ENCODE measurements at regions of chr15 and their contacts with region 1.

Region 1: GRCh38 chr15:92797168-92797951 is 102.8 kb upstream of the CHD2 start:
- DNase-seq: peak; percentile 89
- H3K4me3 ChIP-seq: no peak overlapping the region
- H3K27ac ChIP-seq: no peak overlapping the region
- H3K4me1 ChIP-seq: peaks cover 9% of the 10 kb centered on the region
- CTCF ChIP-seq: peak; percentile 96

Region 2: GRCh38 chr15:92917606-92918407 is 120.4 kb after region 1 on chr15:
- CTCF ChIA-PET with region 1: interaction called, 5 read pairs
- POLR2A ChIA-PET with region 1: interaction called, 5 read pairs
- intact Hi-C with region 1: loop called (anchors 1 kb)
- DNase-seq: peak; percentile 95
- H3K4me3 ChIP-seq: peak overlapping the region; percentile 2
- H3K27ac ChIP-seq: peak overlapping the region; percentile 74
- H3K4me1 ChIP-seq: peaks cover 73% of the 10 kb centered on the region
- CTCF ChIP-seq: peak; percentile 99

Region 3: GRCh38 chr15:93020976-93021772 is 223.8 kb after region 1 on chr15:
- CTCF ChIA-PET with region 1: no interaction called
- POLR2A ChIA-PET with region 1: no interaction called
- intact Hi-C with region 1: loop called (anchors 5 kb)
- DNase-seq: no peak
- H3K4me3 ChIP-seq: no peak overlapping the region
- H3K27ac ChIP-seq: no peak overlapping the region
- H3K4me1 ChIP-seq: no peaks in the 10 kb centered on the region
- CTCF ChIP-seq: no peak

Region 4: DNA sequence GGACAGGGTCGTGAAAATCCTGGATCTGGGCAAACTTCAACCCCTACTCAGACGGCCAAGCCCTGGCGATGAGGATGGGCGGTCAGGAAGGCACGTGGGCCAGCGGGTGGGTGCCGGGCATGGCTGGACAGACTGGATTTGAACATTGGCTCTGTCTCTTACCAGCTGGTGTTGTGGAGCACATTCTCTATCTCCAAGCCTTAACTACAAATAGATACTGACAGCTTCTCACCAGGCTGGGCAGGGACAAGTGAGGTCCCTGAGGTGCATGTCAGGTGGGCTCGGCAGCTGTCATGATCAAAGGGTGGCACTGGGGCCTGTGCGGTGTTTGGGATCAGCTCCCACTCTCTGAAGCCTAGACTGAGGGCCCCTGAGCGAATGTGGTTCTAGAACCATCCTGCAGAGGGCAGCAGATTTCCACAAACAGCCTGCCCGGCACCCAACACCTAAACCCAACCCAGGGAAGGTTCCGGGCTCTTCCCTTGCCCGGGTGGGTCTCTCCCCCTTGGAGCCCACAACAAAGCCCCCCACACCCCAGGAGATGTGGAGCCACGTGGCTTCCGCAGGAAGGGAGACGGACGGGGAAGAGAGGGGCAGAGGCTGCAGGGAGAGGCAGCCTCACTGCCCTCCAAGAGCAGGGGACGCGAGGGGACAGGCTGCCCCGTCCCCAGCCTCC is 233.2 kb after region 1 on chr15:
- CTCF ChIA-PET with region 1: interaction called, 10 read pairs
- POLR2A ChIA-PET with region 1: no interaction called
- intact Hi-C with region 1: no loop called
- DNase-seq: peak; percentile 69
- H3K4me3 ChIP-seq: no peak overlapping the region
- H3K27ac ChIP-seq: no peak overlapping the region
- H3K4me1 ChIP-seq: no peaks in the 10 kb centered on the region
- CTCF ChIP-seq: peak; percentile 87